Mammary epithelial cell (primary cell): ENCODE measurements at regions of chr2 and their contacts with region 1.

Region 1: GRCh38 chr2:163191372-163191771 is 352.8 kb upstream of the KCNH7 start:
- DNase-seq: peak; percentile 32
- H3K4me3 ChIP-seq: no peak overlapping the region
- H3K27ac ChIP-seq: no peak overlapping the region
- H3K4me1 ChIP-seq: peaks cover 5% of the 10 kb centered on the region
- H3K27me3 ChIP-seq: no peaks in the 10 kb centered on the region
- CTCF ChIP-seq: peak; percentile 72 to 74

Region 2: DNA sequence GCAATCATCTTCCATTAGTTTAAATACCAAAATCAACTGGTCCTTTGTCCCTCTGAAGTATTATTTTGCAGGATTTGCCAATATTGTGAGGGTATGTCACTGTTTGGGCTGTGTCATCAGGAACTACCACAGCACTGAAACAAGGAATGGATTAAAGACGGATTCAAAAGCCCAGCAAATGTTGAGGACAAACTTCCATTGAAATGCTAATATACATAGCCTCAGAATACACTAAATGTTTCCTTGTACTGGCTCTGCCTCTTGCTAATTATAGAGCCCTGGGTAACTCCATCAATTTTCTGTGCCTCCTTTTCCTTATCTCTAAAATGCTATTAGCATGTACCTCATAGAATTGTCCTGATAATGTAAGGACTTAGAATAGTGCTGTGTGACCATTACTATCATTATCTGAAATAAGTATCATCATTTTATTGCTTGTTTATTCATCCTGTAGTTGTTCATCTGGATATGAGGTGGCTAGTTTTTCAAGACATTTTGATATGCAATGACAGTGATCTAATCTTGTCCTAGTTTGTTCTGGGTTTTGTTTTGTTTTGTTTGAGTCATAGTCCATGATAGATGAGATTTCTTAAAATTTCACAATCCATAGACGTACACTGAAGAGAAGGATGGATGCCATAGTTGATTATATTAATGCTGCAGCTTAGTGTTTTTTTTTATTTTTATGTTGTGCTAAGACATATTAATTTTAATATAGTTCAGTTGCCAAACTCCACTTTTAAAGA is 19.4 kb before region 1 on chr2:
- CTCF ChIA-PET with region 1: no interaction called
- dilution Hi-C with region 1: no loop called
- in situ Hi-C with region 1: no loop called
- intact Hi-C with region 1: no loop called
- DNase-seq: peak; percentile 48
- H3K4me3 ChIP-seq: no peak overlapping the region
- H3K27ac ChIP-seq: no peak overlapping the region
- H3K4me1 ChIP-seq: no peaks in the 10 kb centered on the region
- H3K27me3 ChIP-seq: no peaks in the 10 kb centered on the region
- CTCF ChIP-seq: no peak

Region 3: GRCh38 chr2:163471947-163472346 is 280.6 kb after region 1 on chr2:
- CTCF ChIA-PET with region 1: no interaction called
- dilution Hi-C with region 1: no loop called
- in situ Hi-C with region 1: loop called in 1 of 2 experiments (anchors 25 kb)
- intact Hi-C with region 1: loop called (anchors 5 kb)
- DNase-seq: peak; percentile 19
- H3K4me3 ChIP-seq: no peak overlapping the region
- H3K27ac ChIP-seq: no peak overlapping the region
- H3K4me1 ChIP-seq: no peaks in the 10 kb centered on the region
- H3K27me3 ChIP-seq: no peaks in the 10 kb centered on the region
- CTCF ChIP-seq: peak; percentile 20 to 65

Region 4: DNA sequence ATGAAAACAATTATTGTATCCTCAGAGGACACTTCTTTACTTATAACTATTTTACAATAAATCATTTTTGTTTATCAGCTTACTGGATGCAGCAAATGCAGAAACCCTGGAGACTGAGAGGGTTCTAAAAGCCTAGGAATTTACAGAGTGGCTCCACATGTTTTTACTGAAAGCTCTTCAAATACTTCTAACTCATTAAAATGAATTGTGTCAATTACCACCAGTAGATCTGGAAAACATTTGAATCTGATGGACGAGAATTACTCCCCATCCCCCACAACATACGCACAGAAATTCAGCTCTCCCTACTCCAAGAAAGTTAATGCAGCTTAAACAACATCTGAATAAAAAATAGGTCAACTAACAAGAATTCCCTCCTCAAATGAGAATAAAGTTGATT is 864.3 kb after region 1 on chr2:
- CTCF ChIA-PET with region 1: no interaction called
- dilution Hi-C with region 1: no loop called
- in situ Hi-C with region 1: loop called (anchors 10 kb)
- intact Hi-C with region 1: no loop called
- DNase-seq: no peak
- H3K4me3 ChIP-seq: no peak overlapping the region
- H3K27ac ChIP-seq: no peak overlapping the region
- H3K4me1 ChIP-seq: no peaks in the 10 kb centered on the region
- H3K27me3 ChIP-seq: peaks cover 3% of the 10 kb centered on the region
- CTCF ChIP-seq: no peak